GM12878 (cell line): ENCODE measurements at regions of chr7 and their contacts with region 1.

Region 1: DNA sequence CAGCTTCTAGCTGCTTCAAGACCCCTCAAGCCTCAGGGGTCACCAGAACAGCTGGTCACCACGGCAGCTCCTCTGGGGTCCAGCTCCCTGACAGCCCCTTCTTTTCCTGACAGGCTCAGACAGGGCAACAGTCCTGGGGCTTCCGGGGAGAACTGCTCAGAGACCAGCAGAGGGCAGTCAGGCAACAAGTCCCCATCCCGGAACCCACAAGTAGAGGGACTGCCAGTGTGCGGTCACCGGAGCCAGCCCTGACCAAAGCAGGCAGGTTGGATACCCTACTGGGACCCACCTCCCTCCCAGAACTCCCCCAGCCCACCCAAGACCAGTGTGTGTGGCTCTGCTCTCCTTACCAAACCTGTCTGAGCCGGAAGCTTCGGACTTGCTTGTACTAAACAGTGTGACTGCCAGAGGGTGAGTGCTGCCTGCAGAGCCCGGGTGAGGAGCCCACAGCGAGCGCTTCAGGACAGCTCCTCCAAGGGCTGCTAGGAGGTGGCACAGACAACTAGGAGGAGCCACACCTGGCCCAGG is 40.3 kb downstream of the YKT6 start:
- DNase-seq: peak; percentile 27
- ATAC-seq: peak; percentile 95
- H3K4me3 ChIP-seq: no peak overlapping the region
- H3K27ac ChIP-seq: no peak overlapping the region
- H3K4me1 ChIP-seq: no peaks in the 10 kb centered on the region
- H3K27me3 ChIP-seq: no peaks in the 10 kb centered on the region; a peak in 1 of 4 replicates
- CTCF ChIP-seq: peak; percentile 71 to 93 (median 82)
- EP300 ChIP-seq: no peak
- POLR2A ChIP-seq: no peak
- RAD21 ChIP-seq: peak; percentile 82

Region 2: DNA sequence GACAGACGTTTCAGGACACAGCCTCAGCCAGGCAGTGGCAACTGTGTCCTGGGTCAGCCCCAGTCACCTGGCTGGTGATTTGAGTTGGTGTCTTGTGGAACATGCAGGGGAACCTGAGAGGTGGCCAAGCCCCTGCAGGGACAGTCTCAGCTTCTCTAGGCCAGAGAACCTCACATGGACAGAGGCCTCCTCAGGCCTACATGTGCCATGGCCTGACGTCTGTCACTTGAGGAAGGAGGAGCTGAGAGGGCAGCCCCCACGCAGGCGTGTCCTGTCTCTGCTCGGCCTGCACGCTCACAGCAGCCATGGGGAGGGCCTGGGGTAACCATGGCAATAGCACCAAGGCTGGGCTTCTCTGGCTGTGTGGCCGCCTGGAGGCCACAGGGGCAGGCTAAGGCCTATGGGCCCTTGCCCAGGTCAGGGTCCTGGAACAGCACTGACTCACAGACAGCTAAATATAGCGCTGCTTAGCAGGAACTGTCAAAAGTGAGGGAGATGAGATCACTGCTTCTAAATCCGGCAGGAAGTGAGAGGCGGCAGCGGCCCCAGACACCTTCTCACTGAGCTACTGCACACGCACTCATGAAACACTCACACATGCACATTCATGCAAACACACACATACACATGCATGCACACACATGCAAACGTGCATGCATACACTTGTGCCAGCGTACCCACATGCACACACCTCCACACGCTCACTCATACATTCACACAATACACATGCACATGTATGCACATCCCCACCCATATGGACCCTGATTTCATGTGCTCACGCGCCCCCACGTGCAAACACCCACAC is 16.8 kb after region 1 on chr7:
- CTCF ChIA-PET with region 1: interaction called, 10 read pairs
- POLR2A ChIA-PET with region 1: no interaction called
- RAD21 ChIA-PET with region 1: interaction called, 13 read pairs
- SMC1A ChIA-PET with region 1: interaction called, 12 read pairs
- in situ Hi-C with region 1: no loop called
- intact Hi-C with region 1: no loop called
- DNase-seq: peak; percentile 89
- ATAC-seq: peak; percentile 97
- H3K4me3 ChIP-seq: no peak overlapping the region
- H3K27ac ChIP-seq: peak overlapping the region; percentile 94
- H3K4me1 ChIP-seq: peaks cover 28% of the 10 kb centered on the region
- H3K27me3 ChIP-seq: no peaks in the 10 kb centered on the region
- CTCF ChIP-seq: peak in 1 of 3 experiments; percentile 14; a peak in 1 of 6 replicates
- EP300 ChIP-seq: peak; percentile 69 to 93
- POLR2A ChIP-seq: peak; percentile 59; the same call in 1 of the 2 replicates
- RAD21 ChIP-seq: peak; percentile 19; the same call in 1 of the 2 replicates

Region 3: GRCh38 chr7:44368885-44369284 is 127.8 kb after region 1 on chr7:
- CTCF ChIA-PET with region 1: interaction called, 15 read pairs
- POLR2A ChIA-PET with region 1: no interaction called
- RAD21 ChIA-PET with region 1: interaction called, 4 read pairs
- SMC1A ChIA-PET with region 1: interaction called, 5 read pairs
- in situ Hi-C with region 1: no loop called
- intact Hi-C with region 1: loop called (anchors 5 kb)
- DNase-seq: no peak
- ATAC-seq: no peak
- H3K4me3 ChIP-seq: no peak overlapping the region
- H3K27ac ChIP-seq: no peak overlapping the region
- H3K4me1 ChIP-seq: peaks cover 8% of the 10 kb centered on the region; the same call in 1 of the 2 replicates
- H3K27me3 ChIP-seq: no peaks in the 10 kb centered on the region
- CTCF ChIP-seq: no peak
- EP300 ChIP-seq: no peak
- POLR2A ChIP-seq: no peak
- RAD21 ChIP-seq: no peak

Region 4: GRCh38 chr7:44477063-44477830 is 236.2 kb after region 1 on chr7:
- CTCF ChIA-PET with region 1: interaction called, 41 read pairs
- POLR2A ChIA-PET with region 1: interaction called, 5 read pairs
- RAD21 ChIA-PET with region 1: interaction called, 12 read pairs
- SMC1A ChIA-PET with region 1: interaction called, 3 read pairs
- in situ Hi-C with region 1: no loop called
- intact Hi-C with region 1: loop called (anchors 1 kb)
- DNase-seq: peak; percentile 46
- ATAC-seq: peak; percentile 97
- H3K4me3 ChIP-seq: no peak overlapping the region
- H3K27ac ChIP-seq: no peak overlapping the region
- H3K4me1 ChIP-seq: no peaks in the 10 kb centered on the region
- H3K27me3 ChIP-seq: no peaks in the 10 kb centered on the region
- CTCF ChIP-seq: peak; percentile 96 to 98 (median 98); a peak in 5 of 6 replicates
- EP300 ChIP-seq: no peak
- POLR2A ChIP-seq: no peak
- RAD21 ChIP-seq: peak; percentile 98

Region 5: GRCh38 chr7:44490351-44491200 is 249.5 kb after region 1 on chr7 and contains the start of gene NUDCD3:
- CTCF ChIA-PET with region 1: interaction called, 15 read pairs
- POLR2A ChIA-PET with region 1: no interaction called
- RAD21 ChIA-PET with region 1: interaction called, 4 read pairs
- SMC1A ChIA-PET with region 1: interaction called, 4 read pairs
- in situ Hi-C with region 1: no loop called
- intact Hi-C with region 1: no loop called
- DNase-seq: peak; percentile 48
- ATAC-seq: peak; percentile 97
- H3K4me3 ChIP-seq: peak within 1 kb of the TSS; percentile 98
- H3K27ac ChIP-seq: peak within 1 kb of the TSS; percentile 87
- H3K4me1 ChIP-seq: no peaks in the 10 kb centered on the region
- H3K27me3 ChIP-seq: no peaks in the 10 kb centered on the region
- CTCF ChIP-seq: 0 out of 6 replicates have a peak, but pooled peaks of 1 of the 3 experiments have one; percentile 3
- EP300 ChIP-seq: no peak
- POLR2A ChIP-seq: peak; percentile 92
- RAD21 ChIP-seq: no peak
- polyA plus RNA-seq, gene NUDCD3: 25.0 to 30.7 TPM